ENCODE measurements at regions of chr7 and their contacts with region 1.

Region 1: DNA sequence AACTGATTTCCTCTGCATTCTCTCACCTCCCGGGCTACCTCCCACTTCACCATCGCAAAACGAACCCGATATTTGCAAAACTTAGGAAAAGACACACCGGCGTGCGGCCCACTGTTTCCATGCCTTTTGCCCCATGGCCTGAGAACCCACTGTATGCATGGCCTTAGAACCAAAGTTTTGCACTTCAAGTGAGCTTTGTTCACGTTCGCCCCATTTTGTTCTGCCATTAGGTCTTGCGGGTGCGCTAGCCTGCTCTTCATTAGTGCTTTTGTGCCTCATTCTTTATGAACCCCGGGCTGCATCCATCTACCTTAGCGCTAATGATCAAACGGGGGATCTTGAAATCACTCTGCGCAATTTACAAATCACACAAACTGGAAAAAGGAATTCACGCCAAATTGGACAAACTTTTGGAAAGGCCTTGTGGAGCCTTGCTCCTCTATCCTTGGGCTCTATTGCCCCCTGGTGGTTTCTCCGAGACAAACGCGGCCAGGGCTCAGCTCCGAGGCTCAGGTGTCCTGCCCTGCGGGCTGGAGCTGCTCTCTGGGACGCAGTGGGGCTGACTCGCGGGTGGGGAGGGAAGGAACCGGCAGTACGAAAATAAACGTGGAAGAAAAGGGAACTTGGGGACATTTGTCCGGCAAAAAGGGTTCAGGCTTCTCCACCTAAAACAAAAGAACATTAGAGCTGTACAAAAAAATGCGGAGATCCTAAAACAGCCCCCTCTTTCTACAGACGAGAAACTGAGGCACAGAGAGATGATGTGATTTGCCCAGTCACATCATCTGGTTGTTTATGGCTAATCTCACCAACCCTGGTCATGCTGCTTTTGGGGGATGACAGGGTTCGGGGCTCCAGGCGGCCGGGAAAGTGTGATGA is 300.4 kb upstream of the NFE2L3 start:
- DNase-seq: peak; percentile 80 to 92
- H3K4me3 ChIP-seq: no peak overlapping the region
- H3K4me1 ChIP-seq: peaks cover 65% of the 10 kb centered on the region
- H3K27me3 ChIP-seq: no peaks in the 10 kb centered on the region

Region 2: DNA sequence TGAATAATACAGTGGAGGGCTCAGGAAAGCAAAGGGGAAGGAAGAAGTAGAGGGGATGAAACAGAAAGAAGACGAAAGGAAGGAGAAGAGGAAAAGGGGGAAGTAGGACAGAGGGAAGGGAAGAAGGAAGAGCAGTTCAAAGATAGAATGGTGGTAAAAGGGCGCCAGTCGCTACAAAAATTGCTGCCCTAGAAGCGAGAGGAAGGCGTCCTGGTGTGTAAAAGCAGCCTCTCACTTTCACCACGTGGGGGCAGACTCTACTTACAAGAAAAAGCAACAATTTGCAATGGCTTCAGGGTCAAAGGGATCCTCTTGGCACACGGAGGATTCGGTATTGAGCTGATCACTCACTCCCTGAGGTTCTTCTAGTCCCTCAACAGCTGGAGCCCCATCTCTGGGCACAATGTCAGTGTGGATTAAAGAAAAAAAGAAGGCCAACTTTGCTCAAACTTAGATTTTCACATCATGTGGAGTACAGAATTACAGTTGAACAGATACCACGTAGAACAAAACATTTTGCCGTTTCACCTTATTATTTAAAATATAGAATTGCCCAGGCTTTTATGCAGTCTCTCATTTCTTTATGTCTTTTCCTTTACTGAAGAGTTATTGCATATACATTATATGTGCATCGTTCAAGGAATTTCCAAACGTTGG is 591.9 kb before region 1 on chr7:
- in situ Hi-C with region 1: loop called (anchors 5 kb)
- DNase-seq: peak; percentile 82
- H3K4me3 ChIP-seq: no peak overlapping the region
- H3K4me1 ChIP-seq: peaks cover 4% of the 10 kb centered on the region
- H3K27me3 ChIP-seq: peaks cover under 1% of the 10 kb centered on the region; the same call in 1 of the 2 replicates

Region 3: DNA sequence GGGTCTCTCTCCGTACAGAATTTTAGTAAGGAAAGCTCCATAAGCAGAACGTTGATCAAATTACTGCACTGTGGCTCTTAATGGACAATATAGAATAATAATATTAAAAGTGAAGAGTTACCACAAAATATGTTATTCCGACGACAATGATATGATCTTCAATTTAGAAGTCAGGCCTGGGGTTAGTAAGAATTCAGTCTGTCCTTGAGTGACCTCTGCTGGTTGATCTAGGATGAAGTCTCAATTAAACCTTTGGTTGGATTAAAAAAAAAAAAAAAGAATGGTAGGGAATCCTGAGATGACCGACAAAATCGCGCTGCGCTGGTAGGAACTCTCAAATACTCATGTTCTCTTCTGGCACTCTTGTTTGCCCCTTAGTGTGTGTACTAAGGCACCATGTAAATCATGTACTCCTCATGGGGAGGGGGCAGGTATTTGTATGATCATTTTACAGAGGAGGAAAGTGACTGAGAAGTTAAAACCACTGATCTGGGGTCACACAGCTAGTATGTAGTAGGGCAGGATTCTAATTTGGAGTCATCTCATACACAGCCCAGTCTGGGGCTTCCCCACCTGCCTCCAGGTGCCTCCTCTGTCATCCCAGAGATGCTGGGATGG is 462.0 kb before region 1 on chr7:
- in situ Hi-C with region 1: loop called (anchors 5 kb)
- DNase-seq: peak; percentile 37 to 50
- H3K4me3 ChIP-seq: no peak overlapping the region
- H3K4me1 ChIP-seq: no peaks in the 10 kb centered on the region
- H3K27me3 ChIP-seq: peaks cover 4% of the 10 kb centered on the region

Region 4: DNA sequence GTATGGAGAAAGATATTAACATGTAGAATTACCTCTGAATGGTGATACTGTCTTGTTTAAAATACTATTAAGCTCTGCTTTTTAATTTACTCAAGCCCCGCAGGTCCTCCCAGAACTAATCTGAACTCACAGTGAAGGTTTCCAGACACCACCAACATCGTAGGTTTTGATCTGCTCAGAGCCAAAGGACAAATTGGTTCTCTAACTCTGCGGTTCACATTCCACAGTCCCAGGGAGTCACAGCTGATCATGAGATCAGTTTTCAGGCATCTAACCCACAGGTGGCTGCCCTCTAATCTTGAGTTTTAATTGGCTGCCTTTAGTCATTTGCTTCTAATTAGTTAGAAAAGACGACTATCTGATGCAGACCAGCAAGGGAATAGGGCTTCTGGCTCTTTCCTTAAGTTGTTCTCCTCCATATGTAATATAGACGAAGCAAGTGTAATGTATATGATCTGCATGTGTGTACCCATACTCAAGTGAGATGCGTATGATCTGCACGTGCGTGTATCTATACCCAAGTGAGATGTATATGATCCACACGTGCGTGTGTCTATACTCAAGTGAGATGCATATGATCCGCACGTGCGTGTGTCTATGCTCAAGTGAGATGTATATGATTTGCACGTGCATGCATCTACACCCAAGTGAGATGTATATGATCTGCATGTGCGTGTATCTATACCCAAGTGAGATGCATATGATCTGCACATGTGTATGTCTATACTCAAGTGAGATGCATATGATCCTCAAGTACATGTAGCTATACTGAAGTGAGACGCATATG is 291.8 kb before region 1 on chr7:
- in situ Hi-C with region 1: loop called (anchors 5 kb)
- DNase-seq: no peak
- H3K4me3 ChIP-seq: no peak overlapping the region
- H3K4me1 ChIP-seq: peaks cover 37% of the 10 kb centered on the region
- H3K27me3 ChIP-seq: no peaks in the 10 kb centered on the region

Region 5: DNA sequence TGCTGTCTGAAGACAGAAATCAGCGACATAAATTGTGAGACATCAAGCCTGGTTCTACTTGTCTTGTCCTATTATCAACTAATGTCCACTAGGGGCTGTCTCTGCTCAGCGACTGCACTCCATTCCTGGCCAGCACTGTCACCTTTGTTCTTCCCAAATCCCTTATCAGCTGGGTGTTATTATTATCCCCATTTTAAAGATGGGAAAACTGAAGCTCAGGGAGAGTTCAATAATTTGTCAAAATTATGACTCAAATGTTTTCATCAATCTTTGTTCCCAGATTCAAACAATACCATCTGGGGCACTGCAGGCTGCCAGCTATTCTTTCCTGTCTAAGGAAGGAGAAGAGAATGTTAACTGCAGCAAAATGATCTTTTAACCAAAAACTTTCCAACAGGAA is 131.1 kb before region 1 on chr7:
- in situ Hi-C with region 1: loop called (anchors 10 kb)
- DNase-seq: peak in 1 of 2 experiments; percentile 41
- H3K4me3 ChIP-seq: no peak overlapping the region
- H3K4me1 ChIP-seq: peaks cover 35% of the 10 kb centered on the region
- H3K27me3 ChIP-seq: no peaks in the 10 kb centered on the region

Region 6: DNA sequence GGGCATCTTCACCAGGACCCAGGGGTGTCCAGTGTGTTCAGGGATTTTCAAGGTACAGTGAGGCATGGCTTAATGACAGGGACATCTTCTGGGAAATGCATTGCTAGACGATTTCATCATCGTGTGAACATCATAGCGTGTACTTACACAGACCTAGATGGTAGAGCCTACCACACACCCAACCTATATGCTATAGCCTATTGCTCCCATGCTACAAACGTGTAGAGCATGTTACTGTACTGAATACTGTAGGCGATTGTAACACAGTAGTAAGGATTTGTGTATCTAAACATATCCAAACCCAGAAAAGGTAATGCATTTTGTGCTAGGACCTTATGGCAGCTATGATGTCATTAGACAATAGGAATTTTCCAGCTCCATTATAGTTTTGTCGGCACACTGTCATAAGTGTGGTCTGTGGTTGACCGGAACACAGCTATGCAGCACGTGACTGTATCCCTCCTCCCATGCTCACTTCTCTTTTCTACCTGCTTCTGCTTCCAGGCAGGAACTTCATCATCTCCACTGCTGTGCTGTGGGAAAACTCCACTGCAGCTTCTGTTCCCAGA is 115.8 kb before region 1 on chr7:
- in situ Hi-C with region 1: no loop called
- DNase-seq: no peak
- H3K4me3 ChIP-seq: no peak overlapping the region
- H3K4me1 ChIP-seq: peaks cover 45% of the 10 kb centered on the region
- H3K27me3 ChIP-seq: no peaks in the 10 kb centered on the region

Region 7: GRCh38 chr7:26398756-26399501 is 547.4 kb after region 1 on chr7:
- in situ Hi-C with region 1: no loop called
- DNase-seq: peak in 1 of 2 experiments; percentile 72
- H3K4me3 ChIP-seq: peak overlapping the region; percentile 31
- H3K4me1 ChIP-seq: peaks cover 16% of the 10 kb centered on the region
- H3K27me3 ChIP-seq: no peaks in the 10 kb centered on the region; the same call in 1 of the 2 replicates

Region 8: GRCh38 chr7:26538689-26539088 is 687.1 kb after region 1 on chr7:
- in situ Hi-C with region 1: no loop called
- DNase-seq: no peak
- H3K4me3 ChIP-seq: no peak overlapping the region
- H3K4me1 ChIP-seq: peaks cover 7% of the 10 kb centered on the region
- H3K27me3 ChIP-seq: peaks cover 74% of the 10 kb centered on the region

Region 9: GRCh38 chr7:27160546-27161213 is 1309.1 kb after region 1 on chr7:
- in situ Hi-C with region 1: loop called (anchors 5 kb)
- DNase-seq: peak; percentile 84 to 94
- H3K4me3 ChIP-seq: peak overlapping the region; percentile 70
- H3K4me1 ChIP-seq: peaks cover 30% of the 10 kb centered on the region
- H3K27me3 ChIP-seq: no peaks in the 10 kb centered on the region